B cell (primary cell): ENCODE measurements at regions of chr11 and their contacts with region 1.

Region 1: DNA sequence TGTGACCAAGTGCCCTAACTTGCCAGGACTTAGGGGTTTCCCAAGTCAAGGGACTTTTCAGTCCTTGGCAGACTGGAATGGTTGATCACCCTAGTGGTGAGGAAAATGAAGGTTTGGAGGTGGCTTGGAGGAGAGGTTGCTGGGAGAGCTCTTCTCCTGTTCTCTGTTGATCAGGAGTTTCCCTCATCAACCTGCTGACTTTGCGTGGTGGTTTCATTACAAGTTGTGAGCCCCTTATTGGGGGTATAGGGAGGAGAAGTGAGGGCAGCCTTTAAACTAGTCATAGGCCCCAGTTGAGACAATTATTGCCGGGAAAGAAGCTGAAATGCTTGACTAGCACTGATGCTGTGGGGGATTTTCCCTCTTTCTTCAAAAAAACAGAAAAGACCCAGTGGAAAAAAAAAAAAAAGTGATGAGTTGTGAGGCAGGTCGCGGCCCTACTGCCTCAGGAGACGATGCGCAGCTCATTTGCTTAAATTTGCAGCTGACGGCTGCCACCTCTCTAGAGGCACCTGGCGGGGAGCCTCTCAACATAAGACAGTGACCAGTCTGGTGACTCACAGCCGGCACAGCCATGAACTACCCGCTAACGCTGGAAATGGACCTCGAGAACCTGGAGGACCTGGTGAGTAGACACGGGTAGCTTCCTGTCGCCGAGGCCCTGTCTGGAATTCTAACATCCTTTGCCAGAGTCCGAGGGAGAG is at the start of gene CXCR5:
- DNase-seq: peak; percentile 94
- ATAC-seq: peak; percentile 83
- H3K4me3 ChIP-seq: peak within 1 kb of the TSS; percentile 80 to 99 (median 95)
- H3K4me3 Mint-ChIP-seq: peak within 1 kb of the TSS; percentile 97
- H3K27ac ChIP-seq: peak within 1 kb of the TSS; percentile 91 to 99
- H3K27ac Mint-ChIP-seq: peak within 1 kb of the TSS; percentile 90
- H3K4me1 ChIP-seq: peaks cover 47 to 63% of the 10 kb centered on the region in 2 donors
- H3K4me1 Mint-ChIP-seq: peaks cover 72% of the 10 kb centered on the region
- H3K27me3 ChIP-seq: no peaks in the 10 kb centered on the region
- H3K27me3 Mint-ChIP-seq: no peaks in the 10 kb centered on the region
- CTCF ChIP-seq: peak; percentile 41
- total RNA-seq, gene CXCR5: 108 and 111 TPM in 2 replicates

Region 2: DNA sequence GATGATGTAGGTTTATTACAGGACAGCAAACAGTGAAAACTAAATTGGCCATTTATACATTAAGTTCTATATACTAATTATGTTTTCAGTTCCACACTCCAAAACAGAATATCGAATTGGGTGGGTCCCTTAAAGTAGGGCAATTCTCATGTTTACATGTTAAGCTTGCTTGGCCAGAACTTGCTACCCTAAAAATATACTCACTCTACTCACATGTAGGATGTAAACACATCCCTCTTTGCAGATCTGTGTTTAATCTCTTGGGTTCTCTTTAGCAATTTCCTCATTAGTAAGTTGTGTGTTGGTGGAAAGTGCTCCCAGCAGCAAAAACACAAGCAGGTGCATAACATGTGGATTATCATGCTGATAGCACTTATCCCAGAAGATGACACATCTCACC is 70.0 kb before region 1 on chr11:
- CTCF ChIA-PET with region 1: interaction called, 10 read pairs
- POLR2A ChIA-PET with region 1: interaction called, 4 read pairs
- intact Hi-C with region 1: no loop called
- DNase-seq: peak; percentile 27
- ATAC-seq: peak; percentile 75
- H3K4me3 ChIP-seq: peak overlapping the region in 1 of 5 experiments; percentile 16
- H3K4me3 Mint-ChIP-seq: peak overlapping the region; percentile 74
- H3K27ac ChIP-seq: peak overlapping the region; percentile 63 to 82
- H3K27ac Mint-ChIP-seq: peak overlapping the region; percentile 81
- H3K4me1 ChIP-seq: peaks cover 46 to 55% of the 10 kb centered on the region in 2 donors
- H3K4me1 Mint-ChIP-seq: peaks cover 68% of the 10 kb centered on the region
- H3K27me3 ChIP-seq: no peaks in the 10 kb centered on the region
- H3K27me3 Mint-ChIP-seq: no peaks in the 10 kb centered on the region
- CTCF ChIP-seq: no peak

Region 3: DNA sequence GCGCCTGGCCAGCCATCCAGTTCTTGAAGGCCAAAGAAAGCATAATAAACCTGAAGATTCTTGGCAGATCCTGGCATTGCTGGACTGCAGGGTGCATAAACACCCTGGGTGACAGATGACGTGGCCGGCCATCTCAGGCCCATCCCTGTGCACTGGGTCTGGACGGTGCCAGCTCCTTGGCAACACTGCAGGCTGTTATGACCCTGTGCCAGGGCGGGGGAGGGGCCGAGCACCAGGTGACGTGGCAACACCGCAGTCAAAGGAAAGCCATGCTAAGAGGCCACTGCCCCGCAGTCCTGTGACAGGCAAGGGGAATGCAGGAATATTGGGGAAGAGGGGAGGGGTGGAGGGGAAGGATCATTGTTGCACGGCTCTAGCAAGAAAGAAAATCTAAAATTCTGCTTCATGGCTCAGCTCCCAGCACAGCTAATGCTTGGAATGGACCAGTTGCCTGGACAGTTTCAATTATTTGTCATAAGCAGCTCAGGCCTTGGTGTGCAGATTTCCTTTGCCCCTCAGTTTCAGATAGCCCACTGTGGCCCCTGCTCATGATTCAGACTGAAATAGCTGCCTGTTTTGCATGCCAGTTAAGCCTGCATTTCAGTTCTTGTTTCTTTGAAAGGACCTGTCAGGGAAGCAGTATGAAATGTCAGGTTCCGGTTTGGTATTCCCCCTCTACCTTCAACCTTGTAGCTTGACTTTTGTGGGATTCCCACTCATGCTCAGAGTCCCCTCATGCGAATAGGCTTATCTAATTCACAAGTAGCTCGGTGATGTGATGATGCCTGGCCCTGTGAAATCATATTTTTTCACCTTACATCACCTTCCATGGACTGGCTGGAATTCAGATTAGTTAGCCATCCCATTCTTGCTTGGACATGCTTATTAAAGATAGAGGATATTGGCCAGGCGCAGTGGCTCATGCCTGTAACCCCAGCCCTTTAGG is 62.8 kb before region 1 on chr11:
- CTCF ChIA-PET with region 1: interaction called, 9 read pairs
- POLR2A ChIA-PET with region 1: interaction called, 39 read pairs
- intact Hi-C with region 1: loop called (anchors 1 kb)
- DNase-seq: peak; percentile 93
- ATAC-seq: peak; percentile 86
- H3K4me3 ChIP-seq: peak overlapping the region in 4 of 5 experiments; percentile 5 to 39 (median 21)
- H3K4me3 Mint-ChIP-seq: peak overlapping the region; percentile 77
- H3K27ac ChIP-seq: peak overlapping the region; percentile 95 to 99
- H3K27ac Mint-ChIP-seq: peak overlapping the region; percentile 98
- H3K4me1 ChIP-seq: peaks cover 67% of the 10 kb centered on the region in 2 donors
- H3K4me1 Mint-ChIP-seq: peaks cover 58% of the 10 kb centered on the region
- H3K27me3 ChIP-seq: no peaks in the 10 kb centered on the region
- H3K27me3 Mint-ChIP-seq: no peaks in the 10 kb centered on the region
- CTCF ChIP-seq: no peak

Region 4: DNA sequence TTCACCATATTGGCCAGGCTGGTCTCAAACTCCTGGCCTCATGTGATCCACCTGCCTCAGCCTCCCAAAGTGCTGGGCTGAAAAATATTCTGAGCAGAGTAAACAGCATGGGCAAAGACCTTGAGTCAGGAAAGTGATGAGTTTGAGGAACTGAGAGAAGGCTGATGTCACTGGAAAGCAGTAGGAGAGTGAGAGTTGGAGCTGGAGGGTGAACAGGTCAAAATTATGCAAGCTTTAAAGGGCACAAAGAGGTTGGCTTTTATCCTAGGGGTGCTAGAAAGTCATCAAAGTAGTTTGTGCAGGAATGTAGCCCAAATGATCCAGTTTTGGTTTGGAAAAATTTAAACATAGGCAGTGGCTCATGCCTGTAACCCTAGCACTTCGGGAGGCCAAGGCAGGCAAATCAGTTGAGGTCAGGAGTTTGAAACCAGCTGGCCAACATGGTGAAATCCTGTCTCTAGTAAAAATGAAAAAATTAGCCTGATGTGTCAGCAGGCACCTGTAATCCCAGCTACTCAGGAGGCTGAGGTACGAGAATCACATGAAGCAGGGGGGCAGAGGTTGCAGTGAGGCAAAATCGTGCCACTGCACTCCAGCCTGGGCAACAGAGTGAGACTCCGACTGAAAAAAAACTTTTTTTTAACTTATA is 44.5 kb before region 1 on chr11:
- CTCF ChIA-PET with region 1: interaction called, 13 read pairs
- POLR2A ChIA-PET with region 1: interaction called, 8 read pairs
- intact Hi-C with region 1: loop called (anchors 2 kb)
- DNase-seq: peak; percentile 72
- ATAC-seq: peak; percentile 85
- H3K4me3 ChIP-seq: no peak overlapping the region
- H3K4me3 Mint-ChIP-seq: peak overlapping the region; percentile 71
- H3K27ac ChIP-seq: peak overlapping the region; percentile 25 to 44
- H3K27ac Mint-ChIP-seq: peak overlapping the region; percentile 79
- H3K4me1 ChIP-seq: peaks cover 27 to 40% of the 10 kb centered on the region in 2 donors
- H3K4me1 Mint-ChIP-seq: peaks cover 41% of the 10 kb centered on the region
- H3K27me3 ChIP-seq: no peaks in the 10 kb centered on the region
- H3K27me3 Mint-ChIP-seq: no peaks in the 10 kb centered on the region
- CTCF ChIP-seq: no peak

Region 5: DNA sequence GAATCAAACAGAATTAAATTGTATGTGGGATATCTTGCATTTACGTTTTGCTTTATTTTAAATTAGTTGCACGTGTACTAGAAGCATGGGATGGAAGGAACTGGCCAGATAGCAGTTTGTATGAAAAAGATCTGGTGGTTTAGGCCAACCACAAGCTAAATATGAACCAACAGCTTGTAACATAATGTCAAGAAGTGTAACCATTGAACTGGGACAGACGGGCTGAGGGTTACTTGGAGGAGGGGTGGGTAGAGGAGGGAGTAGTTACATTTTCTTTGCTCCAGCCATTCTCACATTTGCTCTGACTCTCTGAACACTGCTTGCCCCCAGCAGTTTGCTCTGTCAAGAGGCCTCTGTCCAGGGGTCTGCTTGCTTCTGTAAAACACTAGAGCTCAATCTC is 31.6 kb before region 1 on chr11:
- CTCF ChIA-PET with region 1: interaction called, 5 read pairs
- POLR2A ChIA-PET with region 1: interaction called, 8 read pairs
- intact Hi-C with region 1: loop called (anchors 1 kb)
- DNase-seq: peak; percentile 64
- ATAC-seq: peak; percentile 83
- H3K4me3 ChIP-seq: peak overlapping the region in 1 of 5 experiments; percentile 27
- H3K4me3 Mint-ChIP-seq: peak overlapping the region; percentile 60
- H3K27ac ChIP-seq: peak overlapping the region in 1 of 2 donors; percentile 5
- H3K27ac Mint-ChIP-seq: peak overlapping the region; percentile 81
- H3K4me1 ChIP-seq: peaks cover 21 to 23% of the 10 kb centered on the region in 2 donors
- H3K4me1 Mint-ChIP-seq: peaks cover 33% of the 10 kb centered on the region
- H3K27me3 ChIP-seq: no peaks in the 10 kb centered on the region
- H3K27me3 Mint-ChIP-seq: no peaks in the 10 kb centered on the region
- CTCF ChIP-seq: no peak

Region 6: GRCh38 chr11:118895142-118896039 is 11.9 kb after region 1 on chr11:
- CTCF ChIA-PET with region 1: interaction called, 9 read pairs
- POLR2A ChIA-PET with region 1: interaction called, 20 read pairs
- intact Hi-C with region 1: loop called (anchors 1 kb)
- DNase-seq: peak; percentile 91
- ATAC-seq: peak; percentile 59
- H3K4me3 ChIP-seq: peak overlapping the region in 4 of 5 experiments; percentile 28 to 51 (median 44)
- H3K4me3 Mint-ChIP-seq: peak overlapping the region; percentile 79
- H3K27ac ChIP-seq: peak overlapping the region; percentile 95 to 99
- H3K27ac Mint-ChIP-seq: peak overlapping the region; percentile 86
- H3K4me1 ChIP-seq: peaks cover 73 to 83% of the 10 kb centered on the region in 2 donors
- H3K4me1 Mint-ChIP-seq: peaks cover 83% of the 10 kb centered on the region
- H3K27me3 ChIP-seq: no peaks in the 10 kb centered on the region
- H3K27me3 Mint-ChIP-seq: no peaks in the 10 kb centered on the region
- CTCF ChIP-seq: no peak